Naive thymus-derived CD4-positive, alpha-beta T cell (primary cell): ENCODE measurements at regions of chr12 and their contacts with region 1.

Region 1: DNA sequence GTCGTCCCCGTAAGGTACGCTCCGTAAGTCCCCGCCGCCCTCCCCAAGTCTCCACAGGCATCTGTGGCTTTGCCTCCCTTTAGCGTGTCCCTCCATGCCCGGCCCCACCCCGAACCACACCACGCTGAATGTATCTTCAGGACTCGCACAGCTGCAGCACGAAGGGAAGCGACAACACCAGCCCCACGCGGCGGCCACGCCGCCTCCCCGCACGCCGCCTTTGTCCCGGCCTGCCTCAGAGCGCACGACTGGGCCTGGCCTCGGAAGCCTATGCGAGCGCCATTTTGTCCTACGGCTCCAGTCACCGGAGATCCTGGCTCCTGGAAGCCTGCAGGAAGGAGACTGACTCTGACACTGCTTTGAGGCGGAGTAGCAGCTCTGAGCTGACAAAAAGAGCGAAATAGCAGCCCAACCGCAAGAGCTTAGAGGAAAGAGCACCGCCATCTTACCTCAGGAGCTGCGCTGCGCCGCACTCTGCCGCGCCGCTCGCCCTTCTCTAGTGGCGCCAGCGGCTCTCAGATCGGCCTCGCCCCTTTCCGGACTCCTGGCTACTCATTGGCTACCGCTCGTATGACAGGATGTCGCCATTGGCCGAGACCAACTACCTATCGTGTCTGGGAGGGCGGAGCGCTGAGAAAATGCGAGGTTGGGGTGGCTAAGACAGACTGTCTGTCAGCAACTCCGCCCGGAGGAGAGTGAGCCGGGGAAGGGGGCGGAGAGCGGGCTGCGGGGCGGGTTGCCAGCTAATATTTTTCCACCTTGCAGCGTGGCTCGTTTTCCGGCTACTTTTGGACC is at the start of gene KANSL2:
- DNase-seq: peak; percentile 79 to 98 (median 96)
- ATAC-seq: peak; percentile 97
- H3K4me3 ChIP-seq: peak within 1 kb of the TSS; percentile 88
- H3K4me3 Mint-ChIP-seq: peak within 1 kb of the TSS; percentile 93 to 99 (median 97)
- H3K27ac ChIP-seq: peak within 1 kb of the TSS; percentile 90
- H3K27ac Mint-ChIP-seq: peak within 1 kb of the TSS; percentile 97 to 99 (median 98)
- H3K4me1 ChIP-seq: peaks cover 30 to 38% of the 10 kb centered on the region in 2 donors
- H3K4me1 Mint-ChIP-seq: peaks cover 32 to 59% (median 53%) of the 10 kb centered on the region in 7 donors
- H3K27me3 ChIP-seq: no peaks in the 10 kb centered on the region
- H3K27me3 Mint-ChIP-seq: no peaks in the 10 kb centered on the region
- total RNA-seq, gene KANSL2: 37.5 to 117 (median 74.4) TPM

Region 2: DNA sequence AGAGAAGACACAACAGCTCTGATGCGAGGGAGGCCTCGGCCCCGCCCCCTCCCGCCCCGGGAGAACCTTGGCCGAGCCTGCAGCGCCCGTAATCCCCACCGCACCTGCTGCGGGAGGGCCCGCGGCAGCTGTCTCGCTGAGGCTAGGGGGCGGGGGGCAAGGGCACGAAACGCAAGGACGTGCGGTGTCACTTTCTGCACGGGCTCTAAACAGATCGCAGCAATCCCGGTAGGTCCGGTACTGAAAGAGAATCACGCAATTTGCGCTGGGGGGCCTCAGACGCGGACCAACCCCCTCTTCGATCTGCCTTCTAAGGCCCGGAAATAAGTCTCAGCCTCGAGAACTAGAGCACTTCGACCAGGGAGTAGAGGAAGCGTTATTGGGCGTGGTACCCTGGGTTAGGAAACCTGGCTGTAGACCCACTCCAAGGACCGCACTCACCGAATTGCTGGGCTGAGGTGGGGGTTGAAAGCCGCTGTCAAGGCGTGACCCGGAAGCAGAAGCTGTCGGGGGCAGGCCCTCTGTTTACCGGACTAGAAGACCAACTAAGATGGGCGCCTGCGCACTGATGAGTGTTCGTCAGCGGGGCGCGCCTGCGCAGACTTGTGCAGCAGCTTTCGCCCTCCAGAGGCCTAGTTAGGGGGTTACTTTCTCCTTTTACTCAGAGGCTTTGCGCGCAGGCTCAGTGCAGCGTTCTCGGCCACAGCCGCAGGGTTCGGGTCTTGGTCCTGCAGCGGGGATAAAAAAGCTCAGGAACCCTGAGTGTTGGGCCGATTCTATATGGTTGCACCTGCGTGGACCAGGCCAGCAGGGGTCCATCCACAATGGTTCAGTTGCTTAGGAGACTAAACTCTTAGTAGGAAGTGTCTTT is 524.7 kb before region 1 on chr12 and contains the start of gene ASB8:
- CTCF ChIA-PET with region 1: no interaction called
- POLR2A ChIA-PET with region 1: no interaction called
- intact Hi-C with region 1: loop called in 1 of 2 experiments (anchors 1 kb)
- DNase-seq: peak; percentile 95 to 99 (median 98)
- ATAC-seq: peak; percentile 98
- H3K4me3 ChIP-seq: peak within 1 kb of the TSS; percentile 97
- H3K4me3 Mint-ChIP-seq: peak within 1 kb of the TSS; percentile 90 to 99 (median 97)
- H3K27ac ChIP-seq: peak within 1 kb of the TSS; percentile 84
- H3K27ac Mint-ChIP-seq: peak within 1 kb of the TSS; percentile 95 to 99 (median 99)
- H3K4me1 ChIP-seq: peaks cover 8 to 20% of the 10 kb centered on the region in 2 donors
- H3K4me1 Mint-ChIP-seq: peaks cover 22 to 65% (median 56%) of the 10 kb centered on the region in 7 donors
- H3K27me3 ChIP-seq: no peaks in the 10 kb centered on the region
- H3K27me3 Mint-ChIP-seq: peaks cover 0 to 5% (median 0%) of the 10 kb centered on the region in 5 donors
- total RNA-seq, gene ASB8: 42.9 to 75.9 (median 54.9) TPM

Region 3: GRCh38 chr12:48640854-48641253 is 41.1 kb before region 1 on chr12:
- CTCF ChIA-PET with region 1: no interaction called
- POLR2A ChIA-PET with region 1: no interaction called
- intact Hi-C with region 1: no loop called
- DNase-seq: no peak
- ATAC-seq: no peak
- H3K4me3 ChIP-seq: no peak overlapping the region
- H3K4me3 Mint-ChIP-seq: no peak overlapping the region
- H3K27ac ChIP-seq: no peak overlapping the region
- H3K27ac Mint-ChIP-seq: no peak overlapping the region
- H3K4me1 ChIP-seq: no peaks in the 10 kb centered on the region
- H3K4me1 Mint-ChIP-seq: peaks cover 0 to 7% (median 0%) of the 10 kb centered on the region in 7 donors
- H3K27me3 ChIP-seq: no peaks in the 10 kb centered on the region
- H3K27me3 Mint-ChIP-seq: no peaks in the 10 kb centered on the region

Region 4: GRCh38 chr12:48671231-48671856 is 10.6 kb before region 1 on chr12:
- CTCF ChIA-PET with region 1: interaction called, 3 read pairs
- POLR2A ChIA-PET with region 1: interaction called, 21 read pairs
- intact Hi-C with region 1: no loop called
- DNase-seq: no peak
- ATAC-seq: no peak
- H3K4me3 ChIP-seq: no peak overlapping the region
- H3K4me3 Mint-ChIP-seq: peak overlapping the region in 1 of 10 donors; percentile 14
- H3K27ac ChIP-seq: no peak overlapping the region
- H3K27ac Mint-ChIP-seq: peak overlapping the region in 1 of 9 donors; percentile 57
- H3K4me1 ChIP-seq: peaks cover 0 to 7% of the 10 kb centered on the region in 2 donors
- H3K4me1 Mint-ChIP-seq: peaks cover 4 to 24% (median 14%) of the 10 kb centered on the region in 7 donors
- H3K27me3 ChIP-seq: no peaks in the 10 kb centered on the region
- H3K27me3 Mint-ChIP-seq: no peaks in the 10 kb centered on the region

Region 5: GRCh38 chr12:48716493-48717251 is 34.7 kb after region 1 on chr12 and contains the start of gene CCNT1:
- CTCF ChIA-PET with region 1: interaction called, 4 read pairs
- POLR2A ChIA-PET with region 1: interaction called, 35 read pairs
- intact Hi-C with region 1: loop called (anchors 1 kb)
- DNase-seq: peak; percentile 90 to 100 (median 99)
- ATAC-seq: peak; percentile 93
- H3K4me3 ChIP-seq: peak within 1 kb of the TSS; percentile 88
- H3K4me3 Mint-ChIP-seq: peak within 1 kb of the TSS; percentile 89 to 98 (median 94)
- H3K27ac ChIP-seq: peak within 1 kb of the TSS; percentile 95
- H3K27ac Mint-ChIP-seq: peak within 1 kb of the TSS; percentile 95 to 99 (median 98)
- H3K4me1 ChIP-seq: peaks cover 14 to 24% of the 10 kb centered on the region in 2 donors
- H3K4me1 Mint-ChIP-seq: peaks cover 21 to 50% (median 37%) of the 10 kb centered on the region in 7 donors
- H3K27me3 ChIP-seq: no peaks in the 10 kb centered on the region
- H3K27me3 Mint-ChIP-seq: peaks cover 0 to 4% (median 0%) of the 10 kb centered on the region in 5 donors
- total RNA-seq, gene CCNT1: 62.5 to 127 (median 76.6) TPM

Region 6: DNA sequence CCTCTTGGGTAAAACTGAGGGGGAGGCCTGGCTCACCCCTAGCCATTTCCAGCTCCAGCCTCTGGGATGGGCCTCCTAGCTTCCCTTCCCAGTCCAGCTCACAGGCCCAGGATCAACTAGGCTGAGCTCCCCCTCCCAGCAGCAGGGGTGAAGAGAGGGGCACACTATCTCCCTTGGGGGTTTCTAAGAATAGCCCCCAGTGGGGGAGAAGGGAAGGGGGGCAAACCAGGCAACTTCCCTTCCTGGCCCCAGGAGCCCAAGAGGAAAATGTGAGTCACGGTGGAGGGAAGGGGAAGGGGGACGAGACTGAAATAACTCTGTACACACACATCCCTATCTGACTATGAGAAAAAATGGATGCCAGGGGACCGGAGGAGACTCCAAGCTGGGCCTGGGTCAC is 97.9 kb after region 1 on chr12:
- CTCF ChIA-PET with region 1: no interaction called
- POLR2A ChIA-PET with region 1: no interaction called
- intact Hi-C with region 1: no loop called
- DNase-seq: no peak
- ATAC-seq: no peak
- H3K4me3 ChIP-seq: no peak overlapping the region
- H3K4me3 Mint-ChIP-seq: no peak overlapping the region
- H3K27ac ChIP-seq: no peak overlapping the region
- H3K27ac Mint-ChIP-seq: no peak overlapping the region
- H3K4me1 ChIP-seq: no peaks in the 10 kb centered on the region
- H3K4me1 Mint-ChIP-seq: peaks cover 0 to 3% (median 0%) of the 10 kb centered on the region in 7 donors
- H3K27me3 ChIP-seq: no peaks in the 10 kb centered on the region
- H3K27me3 Mint-ChIP-seq: peaks cover 1 to 10% (median 4%) of the 10 kb centered on the region in 5 donors

Region 7: GRCh38 chr12:48814262-48815125 is 132.6 kb after region 1 on chr12:
- CTCF ChIA-PET with region 1: no interaction called
- POLR2A ChIA-PET with region 1: no interaction called
- intact Hi-C with region 1: loop called (anchors 1 to 5 kb)
- DNase-seq: peak; percentile 18 to 93 (median 47)
- ATAC-seq: peak; percentile 86
- H3K4me3 ChIP-seq: peak overlapping the region; percentile 59
- H3K4me3 Mint-ChIP-seq: peak overlapping the region; percentile 58 to 95 (median 91)
- H3K27ac ChIP-seq: no peak overlapping the region
- H3K27ac Mint-ChIP-seq: peak overlapping the region in 4 of 9 donors; percentile 32 to 85 (median 66)
- H3K4me1 ChIP-seq: peaks cover 7 to 19% of the 10 kb centered on the region in 2 donors
- H3K4me1 Mint-ChIP-seq: peaks cover 18 to 39% (median 33%) of the 10 kb centered on the region in 7 donors
- H3K27me3 ChIP-seq: no peaks in the 10 kb centered on the region
- H3K27me3 Mint-ChIP-seq: peaks cover 0 to 23% (median 5%) of the 10 kb centered on the region in 5 donors